Common myeloid progenitor, CD34-positive (primary cell): ENCODE measurements at regions of chr2 and their contacts with region 1.

Region 1: GRCh38 chr2:73700131-73700611 is 37.0 kb downstream of the TPRKB start:
- DNase-seq: peak in 2 of 3 donors; percentile 35 to 47
- H3K4me3 ChIP-seq: peak overlapping the region in 1 of 7 experiments; percentile 29
- H3K27ac ChIP-seq: no peak overlapping the region
- H3K4me1 ChIP-seq: peaks cover 9 to 53% (median 50%) of the 10 kb centered on the region in 4 experiments
- H3K27me3 ChIP-seq: no peaks in the 10 kb centered on the region

Region 2: GRCh38 chr2:73494031-73494430 is 206.1 kb before region 1 on chr2:
- CTCF ChIA-PET with region 1: no interaction called
- POLR2A ChIA-PET with region 1: no interaction called
- DNase-seq: no peak
- H3K4me3 ChIP-seq: no peak overlapping the region
- H3K27ac ChIP-seq: no peak overlapping the region
- H3K4me1 ChIP-seq: peaks cover 0 to 5% (median 3%) of the 10 kb centered on the region in 4 experiments
- H3K27me3 ChIP-seq: no peaks in the 10 kb centered on the region

Region 3: DNA sequence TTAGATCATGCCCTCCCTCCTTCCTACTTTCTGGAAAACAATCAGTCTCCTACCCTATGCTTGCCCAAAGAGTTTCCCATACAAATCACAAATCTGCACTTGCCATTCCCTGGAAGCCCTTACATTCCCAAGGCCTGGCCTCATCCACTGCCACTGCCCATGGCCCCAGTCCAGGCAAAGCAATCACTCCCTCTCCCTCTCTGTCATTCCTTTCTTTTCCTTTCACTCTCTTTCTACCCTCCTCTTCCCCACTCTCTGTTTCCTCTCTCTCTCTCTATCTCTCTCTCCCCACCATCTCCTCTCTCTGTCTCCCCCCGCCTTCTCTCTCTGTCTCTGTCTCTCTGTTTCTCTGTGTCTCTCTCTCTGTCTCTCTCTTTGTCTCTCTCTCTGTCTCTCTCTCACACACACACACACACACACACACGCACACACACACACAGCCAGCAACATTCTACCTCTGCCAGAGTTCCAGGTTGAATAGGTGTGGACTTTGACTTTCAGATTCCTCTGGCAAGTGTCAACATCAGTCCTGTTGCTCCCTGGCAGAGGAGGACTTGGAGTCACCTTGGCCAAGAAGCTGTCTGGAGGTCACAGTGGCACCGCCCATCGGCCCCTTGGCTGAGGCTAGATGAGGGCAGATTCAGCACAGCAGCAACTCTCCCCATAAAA is 14.3 kb before region 1 on chr2:
- CTCF ChIA-PET with region 1: interaction called, 12 read pairs
- POLR2A ChIA-PET with region 1: no interaction called
- DNase-seq: no peak
- H3K4me3 ChIP-seq: no peak overlapping the region
- H3K27ac ChIP-seq: peak overlapping the region in 1 of 2 experiments; percentile 17
- H3K4me1 ChIP-seq: peaks cover 0 to 15% (median 11%) of the 10 kb centered on the region in 4 experiments
- H3K27me3 ChIP-seq: no peaks in the 10 kb centered on the region

Region 4: DNA sequence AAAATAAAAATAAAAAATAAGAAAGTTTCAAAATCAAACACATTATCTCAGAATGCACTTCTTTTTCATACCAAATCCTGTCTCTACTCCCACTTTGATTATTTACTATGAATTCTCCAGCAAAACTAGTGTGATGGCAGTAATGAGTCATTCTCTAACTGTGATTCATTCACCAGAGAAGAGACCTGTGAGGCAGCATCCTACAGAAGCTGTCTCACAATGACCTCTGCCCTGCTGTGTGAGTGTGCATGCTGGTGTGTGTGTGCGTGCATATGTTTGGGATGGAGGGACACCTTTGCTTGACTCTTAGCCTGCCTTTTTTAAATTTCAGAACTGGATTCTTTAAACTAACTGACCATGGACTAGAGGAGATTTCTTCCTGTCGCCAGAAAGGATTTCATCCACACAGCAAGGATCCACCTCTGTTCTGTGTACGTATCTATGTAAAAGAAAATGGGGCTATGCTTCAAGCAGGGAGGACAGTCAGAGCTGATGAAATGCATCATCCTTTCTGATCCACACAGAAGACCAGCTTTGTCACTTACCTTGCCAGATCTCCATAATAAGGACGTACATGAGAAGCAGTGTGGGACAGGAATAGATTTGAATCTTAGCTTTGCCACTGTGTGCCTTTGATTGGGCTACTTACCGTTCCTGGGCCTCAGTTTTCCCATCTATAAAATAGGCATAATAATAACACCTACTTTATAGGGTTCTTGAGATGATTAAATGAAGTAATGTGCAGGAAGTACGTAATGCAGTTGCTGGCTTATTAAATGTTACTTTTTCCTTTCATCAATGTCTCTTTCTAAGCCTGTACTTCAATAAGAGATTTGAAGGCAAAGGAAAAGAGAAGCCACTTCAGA is 159.8 kb after region 1 on chr2:
- CTCF ChIA-PET with region 1: no interaction called
- POLR2A ChIA-PET with region 1: no interaction called
- DNase-seq: peak in 2 of 3 donors; percentile 20 to 35
- H3K4me3 ChIP-seq: no peak overlapping the region
- H3K27ac ChIP-seq: no peak overlapping the region
- H3K4me1 ChIP-seq: no peaks in the 10 kb centered on the region
- H3K27me3 ChIP-seq: no peaks in the 10 kb centered on the region